GM23248 (cell line): ENCODE measurements at regions of chr2 and their contacts with region 1.

Region 1: GRCh38 chr2:10434886-10435819 is 13.0 kb downstream of the ODC1 start:
- DNase-seq: peak; percentile 81
- H3K4me3 ChIP-seq: no peak overlapping the region
- H3K27ac ChIP-seq: no peak overlapping the region
- H3K4me1 ChIP-seq: no peaks in the 10 kb centered on the region
- H3K27me3 ChIP-seq: no peaks in the 10 kb centered on the region

Region 2: DNA sequence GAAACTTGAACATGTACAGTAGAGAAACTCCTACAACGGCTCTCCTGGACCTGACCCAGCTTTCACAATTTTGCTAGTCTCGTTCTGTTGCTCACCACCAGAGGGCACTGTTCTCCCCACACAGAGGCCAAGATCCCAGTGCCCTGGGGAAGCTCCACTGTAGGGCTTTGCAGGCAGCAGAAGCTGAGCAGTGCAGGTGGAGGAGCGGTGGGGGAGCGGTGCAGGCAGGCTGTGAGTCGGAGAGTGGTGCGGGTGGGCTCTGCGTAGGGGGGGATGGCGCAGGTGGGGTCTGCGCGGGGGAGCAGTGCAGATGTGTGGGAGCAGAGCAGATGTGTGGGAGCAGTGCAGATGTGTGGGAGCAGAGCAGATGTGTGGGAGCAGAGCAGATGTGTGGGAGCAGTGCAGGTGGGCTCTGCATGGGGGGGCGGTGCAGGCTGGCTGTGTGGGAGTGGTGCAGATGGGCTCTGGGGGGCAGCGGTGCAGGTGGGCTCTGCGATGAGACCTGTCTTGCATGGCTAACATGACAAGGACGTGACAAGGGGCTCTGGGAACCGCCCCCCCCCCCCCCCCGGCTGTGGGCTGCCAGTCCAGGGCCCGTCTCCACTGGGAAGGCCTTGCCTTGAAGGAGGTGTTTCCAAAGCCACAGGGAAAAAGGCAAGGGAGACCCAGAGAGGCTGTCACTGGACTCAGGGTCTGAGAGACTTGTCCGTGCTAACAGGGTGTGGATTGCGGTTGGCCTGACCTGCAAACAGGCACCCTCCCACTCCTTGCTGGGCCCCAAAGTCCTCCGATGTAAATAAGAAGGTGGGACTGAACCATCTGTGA is 362.3 kb before region 1 on chr2:
- in situ Hi-C with region 1: loop called (anchors 10 kb)
- DNase-seq: peak; percentile 88
- H3K4me3 ChIP-seq: no peak overlapping the region
- H3K27ac ChIP-seq: no peak overlapping the region
- H3K4me1 ChIP-seq: no peaks in the 10 kb centered on the region
- H3K27me3 ChIP-seq: no peaks in the 10 kb centered on the region

Region 3: DNA sequence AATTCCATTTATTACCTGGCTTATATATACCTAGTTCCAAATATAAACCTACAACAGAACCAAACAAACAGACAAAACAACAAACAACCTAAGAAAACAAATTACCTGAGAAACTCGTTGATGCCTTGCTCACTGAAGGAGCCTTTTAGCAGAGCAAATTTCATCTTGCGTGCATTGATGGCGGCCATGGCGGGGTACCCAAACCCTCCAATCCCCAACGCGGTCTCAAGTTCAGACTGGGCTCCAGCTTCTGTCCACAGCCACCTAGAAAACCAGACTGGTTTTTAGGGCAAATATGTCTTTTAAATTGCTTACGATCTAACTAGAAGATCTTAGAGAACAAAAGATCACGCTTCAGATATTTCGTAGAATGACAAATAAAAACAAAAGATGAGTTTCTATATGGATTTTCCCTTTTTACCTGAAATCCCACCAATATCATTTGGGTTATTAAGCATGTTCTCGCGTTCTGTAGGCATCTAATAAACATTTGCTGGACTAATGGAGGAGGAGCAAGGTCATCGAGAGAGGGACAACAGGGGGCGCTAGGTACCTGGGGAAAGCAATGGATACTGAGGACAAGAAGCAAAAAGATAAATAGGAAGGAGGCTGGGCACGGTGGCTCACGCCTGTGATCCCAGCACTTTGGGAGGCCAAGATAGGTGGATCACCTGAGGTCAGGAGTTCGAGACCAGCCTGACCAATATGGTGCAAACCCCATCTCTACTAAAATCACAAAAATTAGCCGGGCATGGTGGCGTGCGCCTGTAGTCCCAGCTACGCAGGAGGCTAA is 352.2 kb after region 1 on chr2:
- in situ Hi-C with region 1: no loop called
- DNase-seq: peak; percentile 31
- H3K4me3 ChIP-seq: no peak overlapping the region
- H3K27ac ChIP-seq: no peak overlapping the region
- H3K4me1 ChIP-seq: no peaks in the 10 kb centered on the region
- H3K27me3 ChIP-seq: no peaks in the 10 kb centered on the region